Cardiac septum (tissue), 1 donor: ENCODE measurements at regions of chr13 and their contacts with region 1.

Region 1: GRCh38 chr13:39942552-39943273 is 287.3 kb downstream of the COG6 start:
- DNase-seq: no peak

Region 2: GRCh38 chr13:39612023-39612637 is 330.6 kb before region 1 on chr13:
- intact Hi-C with region 1: no loop called
- DNase-seq: no peak

Region 3: DNA sequence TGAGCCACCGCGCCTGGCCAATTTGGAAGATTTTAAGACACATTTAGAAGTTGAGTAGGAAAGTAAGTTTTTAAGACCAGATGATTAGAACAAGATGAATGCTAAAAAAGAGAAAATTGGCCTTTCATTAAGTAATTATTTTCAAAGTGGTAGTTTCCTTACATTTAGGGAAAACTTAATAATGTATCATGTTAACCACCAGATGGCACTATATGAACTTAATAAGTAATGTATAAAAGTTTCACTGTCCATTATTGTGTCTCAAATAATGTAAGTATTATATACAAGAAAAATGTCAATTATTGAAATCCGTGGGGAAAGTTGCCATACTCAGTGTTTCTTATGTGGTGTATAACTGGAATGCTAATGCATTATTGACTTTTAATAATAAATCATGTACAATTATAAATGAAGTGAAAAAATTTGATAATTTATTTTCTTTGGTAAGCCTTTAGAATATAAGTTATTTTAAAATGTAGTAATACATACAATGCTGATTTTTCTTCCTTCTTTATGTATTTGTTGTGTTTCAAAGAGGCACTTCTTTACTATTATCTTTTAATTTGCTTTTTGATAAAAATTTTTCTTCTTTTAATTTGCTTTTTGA is 258.1 kb before region 1 on chr13:
- intact Hi-C with region 1: loop called (anchors 10 kb)
- DNase-seq: no peak

Region 4: DNA sequence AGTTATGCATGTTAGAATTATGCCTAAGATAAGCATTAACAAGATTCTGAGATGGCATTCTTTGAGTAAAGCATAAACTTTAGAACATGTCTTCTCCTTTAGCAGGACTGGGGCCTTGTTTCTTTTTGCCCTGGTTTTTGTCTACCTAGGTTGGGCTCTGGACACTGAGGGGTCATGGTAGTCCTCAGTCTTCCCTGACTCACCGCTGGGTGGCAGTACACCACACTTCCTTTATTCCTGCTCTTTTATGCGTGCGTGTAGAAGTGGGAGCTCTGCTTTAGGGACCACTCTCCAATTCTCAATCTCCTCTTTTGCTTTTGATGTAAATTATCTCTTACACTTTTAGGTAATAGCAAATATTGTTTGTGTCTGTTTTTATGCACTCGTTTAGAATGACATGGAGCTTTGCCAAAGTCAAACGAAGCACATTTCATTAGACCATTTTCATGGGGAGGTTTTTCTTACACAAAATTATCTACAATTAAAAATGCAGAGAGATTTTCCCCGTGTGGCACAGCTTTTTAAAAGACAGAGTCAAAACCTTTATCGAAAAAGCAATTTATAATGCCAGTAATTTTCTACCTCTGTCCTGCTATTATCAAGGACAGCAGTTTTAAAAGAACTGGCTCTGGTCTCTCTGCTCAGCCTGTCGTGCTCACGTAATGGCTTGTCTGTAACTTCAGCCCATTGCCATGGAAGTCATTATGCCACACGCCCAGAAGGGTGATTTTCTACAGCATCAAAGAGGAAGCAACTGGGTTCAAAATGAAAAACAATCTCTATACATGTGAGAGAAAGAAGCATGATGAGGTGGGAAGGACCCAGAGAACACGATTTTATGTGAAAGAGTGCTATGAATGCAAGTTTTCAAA is 126.7 kb after region 1 on chr13:
- intact Hi-C with region 1: loop called (anchors 10 kb)
- DNase-seq: peak; percentile 83

Region 5: GRCh38 chr13:40181203-40181845 is 238.6 kb after region 1 on chr13:
- intact Hi-C with region 1: no loop called
- DNase-seq: no peak